Common myeloid progenitor, CD34-positive (primary cell): ENCODE measurements at regions of chr10 and their contacts with region 1.

Region 1: DNA sequence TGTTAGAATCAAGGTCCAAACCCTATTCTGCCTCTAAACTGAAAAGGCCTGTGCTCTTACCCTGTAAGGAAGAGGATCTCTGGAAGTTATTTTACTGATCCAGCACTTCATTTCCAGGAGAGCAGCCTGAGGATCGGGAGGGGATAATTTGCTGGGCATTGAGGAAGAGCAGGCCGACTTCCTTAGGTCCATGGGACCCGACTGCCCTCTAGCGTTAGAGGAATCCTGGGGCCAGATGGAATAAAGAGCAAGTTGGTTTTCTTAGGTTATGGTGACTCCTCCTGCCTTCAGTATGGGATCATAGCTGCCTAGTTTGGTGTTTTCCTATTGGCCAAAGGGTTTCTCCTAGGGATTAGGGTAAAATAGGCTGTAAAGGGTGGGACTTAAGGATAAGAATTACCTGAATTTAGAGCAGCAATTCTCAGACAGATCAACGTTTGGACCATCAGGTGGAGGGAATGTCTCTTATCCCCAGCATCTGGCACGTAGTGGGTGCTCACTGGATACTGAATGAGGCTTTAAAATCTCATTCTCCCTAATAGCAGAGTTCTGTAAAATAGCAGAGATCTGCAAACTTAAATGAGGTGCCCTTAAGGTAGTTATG is 40.0 kb upstream of the SORBS1 start:
- DNase-seq: peak; percentile 79 to 83 (median 79)
- H3K4me3 ChIP-seq: no peak overlapping the region
- H3K27ac ChIP-seq: no peak overlapping the region
- H3K4me1 ChIP-seq: no peaks in the 10 kb centered on the region
- H3K27me3 ChIP-seq: no peaks in the 10 kb centered on the region

Region 2: DNA sequence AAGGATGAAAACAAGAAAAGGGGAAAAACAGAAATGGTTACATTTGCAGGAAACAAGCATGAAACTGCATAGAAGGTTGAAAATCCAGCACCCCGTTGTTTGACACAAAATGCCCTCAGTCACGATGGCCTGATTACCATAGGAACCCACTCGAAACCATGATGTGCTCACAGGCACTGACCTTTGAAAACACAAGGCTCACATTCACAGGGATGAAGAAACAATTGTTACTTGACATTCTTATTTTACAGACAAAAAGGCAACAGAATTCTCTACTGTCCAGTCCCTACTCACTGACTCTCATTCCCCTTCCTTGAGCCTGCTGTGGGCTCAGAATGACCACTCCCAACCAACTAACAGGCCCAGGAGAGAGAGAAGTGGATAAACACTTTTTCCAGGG is 179.0 kb before region 1 on chr10:
- CTCF ChIA-PET with region 1: interaction called, 11 read pairs
- POLR2A ChIA-PET with region 1: no interaction called
- DNase-seq: no peak
- H3K4me3 ChIP-seq: no peak overlapping the region
- H3K27ac ChIP-seq: no peak overlapping the region
- H3K4me1 ChIP-seq: peaks cover 0 to 8% (median 1%) of the 10 kb centered on the region in 4 experiments
- H3K27me3 ChIP-seq: peaks cover 0 to 3% (median 0%) of the 10 kb centered on the region in 5 experiments

Region 3: GRCh38 chr10:95440756-95441546 is 160.3 kb before region 1 on chr10:
- CTCF ChIA-PET with region 1: interaction called, 22 read pairs
- POLR2A ChIA-PET with region 1: no interaction called
- DNase-seq: peak in 2 of 3 donors; percentile 34 to 35
- H3K4me3 ChIP-seq: no peak overlapping the region
- H3K27ac ChIP-seq: no peak overlapping the region
- H3K4me1 ChIP-seq: peaks cover 0 to 5% (median 2%) of the 10 kb centered on the region in 4 experiments
- H3K27me3 ChIP-seq: no peaks in the 10 kb centered on the region

Region 4: DNA sequence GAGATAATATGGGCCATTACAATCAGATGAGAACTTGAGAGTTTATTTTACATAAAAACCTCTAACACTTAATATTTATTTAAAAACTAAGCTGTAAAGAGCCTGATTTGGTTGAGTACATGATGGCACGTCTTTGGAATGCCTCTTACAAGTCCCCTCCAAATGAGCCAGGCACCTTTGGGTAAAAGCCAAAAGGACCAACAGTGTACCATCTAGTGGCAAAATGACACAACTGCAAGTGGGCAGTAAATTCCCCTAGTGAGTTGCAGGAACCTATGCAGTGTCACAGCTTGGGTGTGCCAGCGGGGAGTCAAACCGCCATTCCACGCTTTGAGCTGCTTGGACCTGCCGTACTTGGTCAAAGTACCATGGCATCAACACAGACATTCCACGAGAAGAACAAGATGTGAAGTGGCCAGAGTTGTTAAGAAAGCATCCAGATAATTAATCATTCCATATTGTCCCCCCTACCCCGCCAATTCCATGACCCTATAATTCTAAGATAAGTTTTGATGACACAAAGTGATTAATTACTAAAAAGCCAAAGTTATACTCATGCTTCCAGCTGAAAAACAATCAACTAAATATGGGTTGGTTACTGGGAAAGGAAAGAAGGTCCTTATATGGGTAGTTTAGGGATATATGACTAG is 155.3 kb before region 1 on chr10:
- CTCF ChIA-PET with region 1: interaction called, 22 read pairs
- POLR2A ChIA-PET with region 1: interaction called, 4 read pairs
- DNase-seq: peak; percentile 75 to 86 (median 83)
- H3K4me3 ChIP-seq: no peak overlapping the region
- H3K27ac ChIP-seq: no peak overlapping the region
- H3K4me1 ChIP-seq: peaks cover 0 to 9% (median 2%) of the 10 kb centered on the region in 4 experiments
- H3K27me3 ChIP-seq: no peaks in the 10 kb centered on the region